Mucosa of descending colon (tissue), 3 donors: ENCODE measurements at regions of chr1 and their contacts with region 1.

Region 1: DNA sequence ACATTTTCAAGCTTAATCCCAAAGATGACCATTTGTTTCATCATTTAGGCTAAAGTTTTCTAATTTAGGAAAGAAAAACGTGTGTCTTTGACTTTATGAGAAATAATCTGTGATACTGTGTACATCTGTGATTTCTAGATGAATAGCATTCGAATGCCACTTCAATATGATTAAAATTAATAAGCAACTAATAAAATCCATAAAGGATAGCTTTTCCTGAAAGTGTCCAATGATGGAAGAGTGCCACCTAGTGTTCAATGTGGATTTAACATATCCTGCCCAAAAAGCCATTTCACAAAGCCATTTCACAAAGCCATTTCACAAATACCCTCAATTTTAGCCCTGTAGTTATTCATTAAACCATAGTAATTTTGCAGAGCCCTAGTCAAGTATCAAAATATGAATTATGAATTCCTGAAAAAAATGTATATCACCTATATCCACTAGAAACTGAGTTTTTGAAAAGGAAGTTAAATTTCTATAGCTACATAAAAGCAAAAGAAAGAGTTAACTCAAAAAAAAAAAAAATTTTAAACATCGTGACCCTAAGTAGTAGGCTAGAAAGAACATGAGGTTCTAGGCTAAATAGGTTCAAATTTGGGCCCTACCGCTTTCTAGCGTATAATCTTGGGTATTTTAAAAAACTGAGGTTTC is 19.1 kb downstream of the NME7 start:
- DNase-seq: peak in 1 of 3 donors; percentile 63
- ATAC-seq: peak; percentile 42
- H3K4me3 ChIP-seq: no peak overlapping the region
- H3K4me1 ChIP-seq: peaks cover 3% of the 10 kb centered on the region
- CTCF ChIP-seq: peak; percentile 52

Region 2: DNA sequence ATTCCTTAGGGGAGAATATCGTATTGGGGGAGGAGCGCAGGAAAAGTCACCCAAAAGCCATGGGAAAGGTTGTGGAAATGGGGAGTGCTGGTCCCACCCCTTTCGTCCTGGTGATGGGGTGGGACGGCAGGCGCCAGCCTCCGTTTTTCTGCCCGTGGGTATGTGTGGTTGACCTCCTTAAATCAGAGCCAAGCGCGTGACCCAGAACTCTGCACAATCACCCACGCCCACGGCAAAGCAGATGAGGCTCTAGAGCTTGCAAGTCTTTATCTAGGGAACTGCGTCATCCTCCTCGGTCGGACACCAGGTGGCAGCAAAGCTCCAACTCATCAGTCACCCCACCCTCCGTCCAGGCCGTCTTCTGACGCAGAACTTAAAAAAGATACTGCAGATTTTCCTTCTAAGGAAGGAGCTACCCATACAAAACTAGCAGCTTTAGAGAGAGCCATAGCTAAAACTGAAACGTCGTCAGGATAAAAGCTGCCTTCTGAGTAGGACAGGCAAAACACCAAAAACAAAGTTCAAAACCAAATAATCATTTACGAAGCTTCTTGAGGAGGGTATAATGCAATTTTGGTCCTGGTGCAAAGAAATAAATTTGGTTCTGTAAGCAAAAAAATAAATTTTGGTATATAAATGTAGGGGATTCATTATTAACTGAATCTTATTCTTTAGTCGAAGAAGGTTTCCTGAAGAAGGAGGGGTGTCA is 1005.8 kb before region 1 on chr1:
- intact Hi-C with region 1: loop called in 1 of 2 experiments (anchors 10 kb)
- DNase-seq: peak; percentile 86 to 90 (median 88)
- ATAC-seq: peak; percentile 99
- H3K4me3 ChIP-seq: no peak overlapping the region
- H3K4me1 ChIP-seq: peaks cover 6% of the 10 kb centered on the region
- CTCF ChIP-seq: peak; percentile 85

Region 3: GRCh38 chr1:168603501-168604110 is 744.9 kb before region 1 on chr1:
- intact Hi-C with region 1: loop called (anchors 5 kb)
- DNase-seq: peak; percentile 65 to 87 (median 85)
- ATAC-seq: peak; percentile 94
- H3K4me3 ChIP-seq: no peak overlapping the region
- H3K4me1 ChIP-seq: peaks cover 2% of the 10 kb centered on the region
- CTCF ChIP-seq: peak; percentile 62

Region 4: GRCh38 chr1:168609133-168609715 is 739.3 kb before region 1 on chr1:
- intact Hi-C with region 1: loop called (anchors 5 kb)
- DNase-seq: no peak
- ATAC-seq: no peak
- H3K4me3 ChIP-seq: no peak overlapping the region
- H3K4me1 ChIP-seq: peaks cover 2% of the 10 kb centered on the region
- CTCF ChIP-seq: no peak